Activated CD4-positive, alpha-beta memory T cell treated with anti-CD3 and anti-CD28 coated beads for 36 hours (primary cell): ENCODE measurements at regions of chr19 and their contacts with region 1.

Region 1: DNA sequence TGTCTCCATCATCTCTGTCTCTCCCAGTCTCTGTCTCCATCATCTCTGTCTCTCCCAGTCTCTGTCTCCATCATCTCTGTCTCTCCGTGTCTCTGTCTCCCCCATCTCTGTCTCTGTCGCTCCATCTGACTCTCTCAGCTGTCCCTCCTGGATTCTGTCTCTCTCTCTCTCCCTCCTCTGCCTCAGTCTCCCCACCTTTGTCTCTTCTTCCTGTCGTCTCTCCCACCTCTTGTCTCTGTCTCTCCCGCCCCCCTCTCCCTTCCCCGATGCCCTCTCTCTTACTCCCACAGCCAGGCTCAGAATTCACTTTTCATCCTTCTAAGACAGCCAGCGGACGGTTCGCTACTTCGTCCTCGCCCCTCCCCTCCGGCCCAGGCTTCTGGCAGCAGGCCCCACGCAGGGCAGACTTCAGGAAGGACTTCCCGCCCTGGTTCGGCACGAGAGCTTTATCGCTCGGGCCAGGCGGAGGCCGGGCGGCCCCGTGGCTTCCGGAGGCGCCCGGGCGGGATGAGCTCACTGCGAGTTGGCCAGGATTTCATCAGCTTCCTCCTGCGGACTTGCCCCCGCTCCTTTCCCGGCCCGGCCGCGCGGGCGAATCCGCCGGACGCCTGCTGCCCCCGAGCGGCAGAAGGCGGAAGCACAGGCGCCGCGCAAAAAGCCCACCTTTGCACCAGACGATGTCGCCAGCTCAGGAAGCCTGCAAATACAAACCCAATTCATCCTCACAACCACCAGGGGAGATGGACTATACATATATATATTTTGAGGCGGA is 12.4 kb upstream of the CCDC9 start:
- DNase-seq: peak; percentile 96
- H3K4me3 Mint-ChIP-seq: peak overlapping the region; percentile 76
- H3K27ac Mint-ChIP-seq: peak overlapping the region; percentile 90
- H3K4me1 Mint-ChIP-seq: peaks cover 25% of the 10 kb centered on the region
- H3K27me3 Mint-ChIP-seq: peaks cover under 1% of the 10 kb centered on the region

Region 2: GRCh38 chr19:47035127-47036096 is 208.6 kb before region 1 on chr19:
- CTCF ChIA-PET with region 1: interaction called, 29 read pairs
- POLR2A ChIA-PET with region 1: interaction called, 3 read pairs
- intact Hi-C with region 1: loop called (anchors 1 kb)
- DNase-seq: peak; percentile 98
- H3K4me3 Mint-ChIP-seq: peak overlapping the region; percentile 81
- H3K27ac Mint-ChIP-seq: peak overlapping the region; percentile 73
- H3K4me1 Mint-ChIP-seq: peaks cover 16% of the 10 kb centered on the region
- H3K27me3 Mint-ChIP-seq: peaks cover 10% of the 10 kb centered on the region

Region 3: DNA sequence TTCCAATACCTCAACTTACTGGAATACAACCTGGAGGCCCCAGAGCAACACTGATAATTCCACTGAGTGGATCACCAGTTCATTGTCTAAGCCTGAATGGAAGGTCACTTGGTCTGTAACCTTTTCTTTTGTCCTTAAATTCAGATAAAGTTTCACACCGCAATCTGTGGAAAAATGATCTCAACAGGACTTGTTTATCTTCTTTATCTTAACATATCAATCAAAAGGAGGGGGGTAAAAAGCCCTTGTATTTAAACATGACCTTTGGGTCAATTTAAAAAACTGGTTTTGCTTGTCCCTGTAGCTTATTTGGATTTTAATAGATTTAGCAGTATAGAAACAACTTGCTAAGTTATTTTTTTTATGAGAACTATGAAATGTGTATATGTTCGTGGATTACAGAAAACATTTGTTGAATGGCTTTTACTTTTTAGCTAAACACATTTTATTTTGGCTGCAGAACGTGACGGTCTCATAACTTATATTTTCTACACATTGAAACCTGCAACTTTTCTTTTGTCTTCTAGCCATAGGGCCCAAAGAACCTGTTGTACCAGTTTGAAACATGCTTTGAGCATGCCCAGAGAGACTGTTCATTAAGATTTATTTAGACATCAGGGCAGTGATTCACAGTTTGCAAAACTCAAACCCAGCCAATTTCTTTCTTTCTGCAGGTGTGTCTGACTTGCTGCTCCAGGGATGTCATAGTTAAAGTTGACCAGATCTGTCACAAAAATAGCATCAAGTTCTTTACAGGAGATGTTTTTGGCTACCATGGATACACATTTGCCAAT is 91.5 kb before region 1 on chr19:
- CTCF ChIA-PET with region 1: interaction called, 151 read pairs
- POLR2A ChIA-PET with region 1: interaction called, 10 read pairs
- intact Hi-C with region 1: loop called (anchors 1 kb)
- DNase-seq: no peak
- H3K4me3 Mint-ChIP-seq: no peak overlapping the region
- H3K27ac Mint-ChIP-seq: no peak overlapping the region
- H3K4me1 Mint-ChIP-seq: peaks cover 58% of the 10 kb centered on the region
- H3K27me3 Mint-ChIP-seq: no peaks in the 10 kb centered on the region

Region 4: GRCh38 chr19:47190167-47190727 is 53.7 kb before region 1 on chr19:
- CTCF ChIA-PET with region 1: interaction called, 52 read pairs
- POLR2A ChIA-PET with region 1: interaction called, 17 read pairs
- intact Hi-C with region 1: loop called (anchors 2 kb)
- DNase-seq: peak; percentile 84
- H3K4me3 Mint-ChIP-seq: peak overlapping the region; percentile 58
- H3K27ac Mint-ChIP-seq: peak overlapping the region; percentile 68
- H3K4me1 Mint-ChIP-seq: peaks cover 65% of the 10 kb centered on the region
- H3K27me3 Mint-ChIP-seq: no peaks in the 10 kb centered on the region

Region 5: GRCh38 chr19:47231215-47231984 is 12.6 kb before region 1 on chr19:
- CTCF ChIA-PET with region 1: interaction called, 141 read pairs
- POLR2A ChIA-PET with region 1: interaction called, 32 read pairs
- intact Hi-C with region 1: loop called (anchors 1 kb)
- DNase-seq: peak; percentile 93
- H3K4me3 Mint-ChIP-seq: peak overlapping the region; percentile 71
- H3K27ac Mint-ChIP-seq: peak overlapping the region; percentile 63
- H3K4me1 Mint-ChIP-seq: peaks cover 24% of the 10 kb centered on the region
- H3K27me3 Mint-ChIP-seq: no peaks in the 10 kb centered on the region

Region 6: DNA sequence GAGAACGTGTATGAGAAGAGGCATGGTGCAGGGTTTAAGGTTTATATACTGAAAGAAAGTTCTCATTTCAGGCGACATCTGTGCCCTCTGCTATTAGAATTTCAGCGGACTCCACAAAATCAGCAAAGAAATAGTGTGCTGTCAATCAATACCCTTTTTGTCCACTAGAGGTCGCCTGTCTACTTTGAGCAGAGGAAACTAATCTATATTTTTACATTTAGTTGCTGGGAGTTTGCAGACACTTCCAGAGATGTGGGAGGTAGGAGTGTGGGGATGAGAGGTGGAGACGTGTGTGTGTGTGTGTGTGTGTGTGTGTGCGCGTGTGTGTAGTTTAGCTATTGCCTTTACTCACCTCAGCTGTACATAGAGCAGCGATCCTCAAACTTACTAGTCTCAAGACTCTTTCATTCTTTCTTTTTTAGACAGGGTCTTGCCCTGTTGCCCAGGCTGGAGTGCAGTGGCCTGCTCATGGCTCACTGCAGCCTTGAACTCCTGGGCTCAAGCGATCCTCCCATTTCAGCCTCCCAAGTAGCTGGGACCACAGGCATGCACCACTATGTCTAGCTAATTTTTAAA is 40.5 kb after region 1 on chr19:
- CTCF ChIA-PET with region 1: no interaction called
- POLR2A ChIA-PET with region 1: no interaction called
- intact Hi-C with region 1: no loop called
- DNase-seq: no peak
- H3K4me3 Mint-ChIP-seq: no peak overlapping the region
- H3K27ac Mint-ChIP-seq: no peak overlapping the region
- H3K4me1 Mint-ChIP-seq: peaks cover 10% of the 10 kb centered on the region
- H3K27me3 Mint-ChIP-seq: no peaks in the 10 kb centered on the region

Region 7: GRCh38 chr19:47305309-47305751 is 61.4 kb after region 1 on chr19:
- CTCF ChIA-PET with region 1: no interaction called
- POLR2A ChIA-PET with region 1: no interaction called
- intact Hi-C with region 1: no loop called
- DNase-seq: peak; percentile 62
- H3K4me3 Mint-ChIP-seq: no peak overlapping the region
- H3K27ac Mint-ChIP-seq: no peak overlapping the region
- H3K4me1 Mint-ChIP-seq: peaks cover 8% of the 10 kb centered on the region
- H3K27me3 Mint-ChIP-seq: peaks cover 5% of the 10 kb centered on the region

Region 8: DNA sequence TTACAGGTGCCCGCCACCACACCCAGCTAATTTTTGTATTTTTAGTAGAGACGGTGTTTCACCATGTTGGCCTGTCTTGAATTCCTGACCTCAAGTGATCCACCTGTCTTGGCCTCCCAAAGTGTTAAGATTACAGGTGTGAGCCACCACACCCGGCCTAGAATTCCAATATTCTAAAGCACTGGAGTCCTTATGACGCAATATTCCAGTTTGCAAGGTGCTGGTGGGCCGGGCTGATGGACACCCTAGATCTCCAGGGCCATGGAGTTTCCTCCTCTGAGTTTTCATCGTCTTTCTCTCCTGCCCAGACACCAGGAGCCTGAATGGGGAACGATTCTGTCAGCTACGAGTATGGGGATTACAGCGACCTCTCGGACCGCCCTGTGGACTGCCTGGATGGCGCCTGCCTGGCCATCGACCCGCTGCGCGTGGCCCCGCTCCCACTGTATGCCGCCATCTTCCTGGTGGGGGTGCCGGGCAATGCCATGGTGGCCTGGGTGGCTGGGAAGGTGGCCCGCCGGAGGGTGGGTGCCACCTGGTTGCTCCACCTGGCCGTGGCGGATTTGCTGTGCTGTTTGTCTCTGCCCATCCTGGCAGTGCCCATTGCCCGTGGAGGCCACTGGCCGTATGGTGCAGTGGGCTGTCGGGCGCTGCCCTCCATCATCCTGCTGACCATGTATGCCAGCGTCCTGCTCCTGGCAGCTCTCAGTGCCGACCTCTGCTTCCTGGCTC is 96.7 kb after region 1 on chr19:
- CTCF ChIA-PET with region 1: no interaction called
- POLR2A ChIA-PET with region 1: no interaction called
- intact Hi-C with region 1: no loop called
- DNase-seq: no peak
- H3K4me3 Mint-ChIP-seq: no peak overlapping the region
- H3K27ac Mint-ChIP-seq: no peak overlapping the region
- H3K4me1 Mint-ChIP-seq: peaks cover 10% of the 10 kb centered on the region
- H3K27me3 Mint-ChIP-seq: no peaks in the 10 kb centered on the region